ENCODE measurements at regions of chr4 and their contacts with region 1.

Region 1: DNA sequence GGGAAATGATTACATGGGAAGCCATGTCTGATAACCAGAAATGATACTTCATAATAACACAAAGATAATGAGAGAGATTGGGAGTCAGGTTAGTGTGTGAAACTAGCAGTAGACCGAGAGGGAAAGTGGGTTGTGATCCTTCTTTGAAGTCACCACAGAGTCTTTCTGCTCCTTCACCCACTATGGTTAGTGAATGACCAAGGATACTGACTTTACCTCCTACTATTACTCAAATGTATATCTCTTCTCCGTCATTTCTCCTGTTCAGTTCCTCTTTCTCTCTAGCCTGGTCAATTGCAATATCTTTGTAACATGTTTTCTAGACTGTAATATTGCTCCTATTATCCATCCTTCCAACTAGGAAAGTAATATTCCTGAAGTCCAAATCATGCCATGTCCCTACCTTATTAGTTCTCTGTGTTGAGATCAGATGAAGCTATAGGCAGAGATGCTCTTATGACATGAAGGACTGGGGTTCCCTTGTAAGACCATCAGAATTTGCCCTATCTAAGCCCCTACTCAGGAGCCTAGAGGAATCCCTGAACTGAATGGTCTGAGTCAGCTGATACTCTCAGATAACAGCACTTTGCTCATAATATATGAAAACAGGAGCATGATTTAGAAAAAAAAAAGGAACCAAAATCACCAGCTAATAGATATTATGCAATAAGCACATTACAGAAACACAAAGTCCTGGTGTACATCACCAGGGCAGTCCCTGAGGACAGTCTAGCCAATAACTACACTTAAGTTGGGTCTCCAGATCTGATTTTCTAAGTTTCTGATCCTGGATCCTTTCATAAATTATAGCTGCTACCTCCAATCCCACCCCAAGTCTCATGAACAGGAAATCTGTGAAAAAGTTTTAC is 81.2 kb downstream of the SHROOM3 start:
- DNase-seq: no peak
- ATAC-seq: no peak
- H3K4me3 ChIP-seq: no peak overlapping the region
- H3K27ac ChIP-seq: no peak overlapping the region
- H3K4me1 ChIP-seq: no peaks in the 10 kb centered on the region
- H3K27me3 ChIP-seq: 0 out of 5 replicates have a peak, but pooled peaks cover 0 to 4% of the 10 kb centered on the region in 2 experiments
- CTCF ChIP-seq: no peak
- EP300 ChIP-seq: no peak
- POLR2A ChIP-seq: no peak
- RAD21 ChIP-seq: no peak

Region 2: DNA sequence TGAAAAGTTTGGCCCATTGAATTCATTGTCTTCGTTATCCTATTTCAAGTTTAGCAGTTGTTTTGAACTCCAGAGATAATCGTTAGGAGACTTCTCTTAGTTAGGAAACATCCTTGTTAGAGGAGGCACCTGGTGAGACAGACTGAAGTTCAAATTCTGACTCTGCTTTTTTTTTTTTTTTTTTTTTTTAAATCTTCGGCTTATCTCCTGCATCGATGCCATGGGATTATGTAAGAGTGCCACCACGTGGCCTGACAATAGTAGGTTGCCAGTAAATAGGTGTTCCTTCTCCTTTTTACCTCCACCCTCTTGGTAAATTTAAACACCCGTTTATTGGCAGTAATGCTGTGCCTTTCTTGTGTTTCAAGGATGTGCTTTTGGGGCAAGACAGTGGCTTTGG is 232.4 kb after region 1 on chr4:
- CTCF ChIA-PET with region 1: no interaction called
- POLR2A ChIA-PET with region 1: no interaction called
- in situ Hi-C with region 1: loop called (anchors 5 kb)
- intact Hi-C with region 1: loop called (anchors 1 kb)
- DNase-seq: peak in 2 of 4 experiments; percentile 16 to 38
- ATAC-seq: no peak
- H3K4me3 ChIP-seq: no peak overlapping the region
- H3K27ac ChIP-seq: no peak overlapping the region
- H3K4me1 ChIP-seq: no peaks in the 10 kb centered on the region
- H3K27me3 ChIP-seq: peaks cover 4 to 6% of the 10 kb centered on the region in 2 experiments; a peak in 3 of 5 replicates
- CTCF ChIP-seq: peak; percentile 23 to 45 (median 27); a peak in 4 of 6 replicates
- EP300 ChIP-seq: no peak
- POLR2A ChIP-seq: no peak
- RAD21 ChIP-seq: peak in 1 of 2 experiments; percentile 49; a peak in 3 of 4 replicates

Region 3: DNA sequence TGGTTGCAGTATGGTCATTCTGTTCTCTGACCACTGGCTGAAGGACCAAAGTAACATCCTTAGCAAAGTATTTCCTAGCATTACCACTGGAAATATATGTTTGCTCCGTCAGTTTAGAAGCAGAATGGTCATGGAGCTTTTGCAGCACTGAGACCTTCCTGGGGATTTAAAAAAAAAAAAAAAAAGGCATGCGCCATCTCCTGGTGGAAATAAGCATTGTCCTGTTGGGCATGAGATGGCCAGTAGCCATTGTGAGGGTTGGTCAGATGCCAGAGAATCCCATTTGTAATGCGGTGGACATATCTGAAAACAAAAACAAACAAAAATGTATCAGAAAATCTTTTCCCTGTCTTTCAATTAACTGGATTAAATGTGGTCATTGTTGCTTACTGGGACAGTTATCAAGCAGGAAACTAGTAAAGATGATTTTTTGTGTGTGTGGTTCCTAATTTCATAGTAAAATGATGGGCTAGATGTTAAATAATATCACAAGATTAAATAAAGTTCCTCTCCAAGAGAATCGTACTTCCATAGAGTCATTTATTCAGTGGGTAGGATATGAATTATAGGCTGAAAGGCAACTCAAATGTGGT is 242.2 kb after region 1 on chr4:
- CTCF ChIA-PET with region 1: no interaction called
- POLR2A ChIA-PET with region 1: no interaction called
- in situ Hi-C with region 1: no loop called
- intact Hi-C with region 1: loop called (anchors 2 kb)
- DNase-seq: peak; percentile 40 to 75 (median 61)
- ATAC-seq: peak; percentile 87
- H3K4me3 ChIP-seq: no peak overlapping the region
- H3K27ac ChIP-seq: no peak overlapping the region
- H3K4me1 ChIP-seq: no peaks in the 10 kb centered on the region
- H3K27me3 ChIP-seq: peaks cover 16 to 24% of the 10 kb centered on the region in 2 experiments
- CTCF ChIP-seq: peak; percentile 51 to 72 (median 65)
- EP300 ChIP-seq: no peak
- POLR2A ChIP-seq: no peak
- RAD21 ChIP-seq: peak; percentile 13 to 26; a peak in 1 of 4 replicates

Region 4: DNA sequence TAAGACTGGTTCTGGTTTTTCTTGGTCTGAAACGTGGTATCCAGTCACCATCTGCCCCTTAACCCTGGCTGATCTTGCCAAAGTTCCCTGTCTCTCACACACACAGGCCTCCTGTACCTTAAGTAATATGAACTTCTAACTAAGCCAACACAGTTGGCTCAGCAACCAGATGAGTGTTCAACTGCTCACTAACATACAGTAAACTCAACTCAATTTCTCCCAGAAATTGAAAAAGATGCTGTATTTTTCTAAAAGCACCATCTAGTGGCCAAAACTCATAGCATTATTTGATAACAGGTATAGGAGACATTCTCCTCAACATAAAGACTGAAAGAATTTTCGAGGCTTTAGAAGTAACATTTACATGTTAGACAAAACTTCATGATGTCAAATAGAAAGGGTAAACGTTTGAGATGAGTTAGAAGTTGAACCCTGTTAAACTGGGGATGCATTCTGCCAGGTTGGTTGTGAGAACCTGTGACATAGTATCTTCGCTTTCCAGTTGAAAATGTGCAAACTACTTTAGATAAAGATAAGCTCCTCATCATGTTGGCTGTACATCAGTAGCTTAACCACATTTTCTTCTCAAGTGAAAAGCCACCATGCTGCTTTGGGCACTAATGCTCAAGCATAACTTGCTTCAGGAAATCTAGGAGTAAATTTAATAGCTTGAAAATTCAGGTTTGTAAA is 528.4 kb after region 1 on chr4:
- CTCF ChIA-PET with region 1: interaction called, 3 read pairs
- POLR2A ChIA-PET with region 1: no interaction called
- in situ Hi-C with region 1: loop called (anchors 10 kb)
- intact Hi-C with region 1: loop called (anchors 10 kb)
- DNase-seq: peak; percentile 16 to 44 (median 20)
- ATAC-seq: peak; percentile 68
- H3K4me3 ChIP-seq: no peak overlapping the region
- H3K27ac ChIP-seq: no peak overlapping the region
- H3K4me1 ChIP-seq: peaks cover 0 to 8% of the 10 kb centered on the region in 2 experiments; a peak in 2 of 5 replicates
- H3K27me3 ChIP-seq: no peaks in the 10 kb centered on the region
- CTCF ChIP-seq: peak; percentile 32 to 67 (median 63); a peak in 4 of 6 replicates
- EP300 ChIP-seq: no peak
- POLR2A ChIP-seq: no peak
- RAD21 ChIP-seq: peak; percentile 55 to 58

Region 5: GRCh38 chr4:77652237-77652897 is 1136.2 kb after region 1 on chr4:
- CTCF ChIA-PET with region 1: no interaction called
- POLR2A ChIA-PET with region 1: no interaction called
- in situ Hi-C with region 1: no loop called
- intact Hi-C with region 1: no loop called
- DNase-seq: no peak
- ATAC-seq: no peak
- H3K4me3 ChIP-seq: no peak overlapping the region
- H3K27ac ChIP-seq: no peak overlapping the region
- H3K4me1 ChIP-seq: no peaks in the 10 kb centered on the region
- H3K27me3 ChIP-seq: no peaks in the 10 kb centered on the region; a peak in 1 of 5 replicates
- CTCF ChIP-seq: no peak
- EP300 ChIP-seq: no peak
- POLR2A ChIP-seq: no peak
- RAD21 ChIP-seq: no peak